A549 (cell line): ENCODE measurements at regions of chr10 and their contacts with region 1.

Region 1: DNA sequence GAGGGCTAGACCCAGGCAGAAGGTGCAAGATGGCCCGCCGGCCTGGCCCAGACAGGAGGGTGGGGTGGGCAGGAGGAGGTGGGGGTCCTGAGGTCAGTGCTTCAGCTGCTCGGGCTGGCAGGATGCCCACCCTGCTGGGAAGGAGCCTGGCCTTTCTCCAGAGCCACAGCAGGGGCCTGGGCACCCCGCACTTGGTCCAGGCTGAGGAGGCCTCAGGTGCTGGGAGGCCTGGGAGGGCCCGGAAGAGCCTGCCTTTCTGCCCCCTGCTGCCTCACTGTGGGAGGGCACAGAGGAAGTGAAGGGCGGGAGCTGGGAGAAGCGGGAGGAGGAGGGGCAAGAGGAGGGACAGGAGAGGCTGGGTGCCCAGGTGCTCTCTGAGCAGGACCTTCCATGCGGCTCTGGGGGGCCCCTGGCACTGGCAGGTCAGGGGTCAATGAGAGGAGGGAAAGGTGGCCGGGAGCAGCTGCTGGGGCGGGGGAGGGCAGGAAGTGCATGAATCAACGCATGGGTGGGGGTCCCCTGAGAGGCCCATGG is 49.7 kb downstream of the PWWP2B start:
- DNase-seq: peak; percentile 60 to 87
- ATAC-seq: peak; percentile 56 to 83
- H3K4me3 ChIP-seq: peak overlapping the region; percentile 33
- H3K27ac ChIP-seq: peak overlapping the region; percentile 89 to 99
- H3K4me1 ChIP-seq: peaks cover 74% of the 10 kb centered on the region
- CTCF ChIP-seq: peak; percentile 34; the same call in 2 of the 3 replicates
- EP300 ChIP-seq: no peak
- POLR2A ChIP-seq: 0 out of 2 replicates have a peak, but pooled peaks have one; percentile 5
- RAD21 ChIP-seq: peak; percentile 35 to 49

Region 2: GRCh38 chr10:132387764-132388210 is 58.9 kb before region 1 on chr10:
- CTCF ChIA-PET with region 1: interaction called, 12 read pairs
- POLR2A ChIA-PET with region 1: no interaction called
- DNase-seq: peak; percentile 41 to 93
- ATAC-seq: peak; percentile 15 to 66; a peak in 3 of 6 replicates
- H3K4me3 ChIP-seq: no peak overlapping the region
- H3K27ac ChIP-seq: peak overlapping the region; percentile 51 to 74; a peak in 5 of 6 replicates
- H3K4me1 ChIP-seq: peaks cover 19% of the 10 kb centered on the region; the same call in 2 of the 3 replicates
- CTCF ChIP-seq: peak; percentile 36; the same call in 2 of the 3 replicates
- EP300 ChIP-seq: no peak
- POLR2A ChIP-seq: no peak
- RAD21 ChIP-seq: peak; percentile 71 to 78

Region 3: DNA sequence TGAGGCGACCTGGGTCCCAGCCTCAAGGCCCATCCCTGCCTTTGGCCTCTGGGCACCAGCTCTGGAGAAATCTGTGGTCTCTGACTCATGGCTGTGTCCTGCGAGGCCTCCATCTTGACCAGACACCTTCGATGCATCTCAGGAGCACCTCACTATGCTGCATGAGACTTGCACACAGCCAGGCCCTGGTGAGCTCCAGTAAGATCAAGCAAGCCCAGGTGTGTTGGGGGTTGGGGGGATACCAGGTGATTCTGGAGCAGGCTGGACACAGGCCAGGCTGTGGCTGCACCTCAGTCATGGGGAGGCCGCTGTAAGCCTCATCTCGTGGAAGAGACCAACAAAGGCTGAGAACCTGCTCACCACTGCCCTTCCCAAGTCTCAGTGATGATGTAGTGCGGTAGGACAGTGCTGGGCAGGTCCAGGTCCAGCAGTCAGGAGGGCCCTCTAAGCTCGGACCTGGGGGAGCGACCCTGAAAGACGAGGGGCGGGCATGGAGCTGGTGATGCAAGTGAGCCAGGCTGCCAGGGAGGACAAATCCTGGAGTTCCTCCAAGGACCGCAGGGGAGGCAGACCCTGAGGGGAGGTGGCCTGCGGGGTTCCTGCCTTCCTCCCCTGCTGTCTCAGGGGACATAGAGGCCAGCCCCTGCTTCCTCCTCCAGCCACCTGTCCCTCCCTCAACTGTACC is 53.1 kb before region 1 on chr10:
- CTCF ChIA-PET with region 1: interaction called, 11 read pairs
- POLR2A ChIA-PET with region 1: no interaction called
- DNase-seq: no peak
- ATAC-seq: no peak
- H3K4me3 ChIP-seq: no peak overlapping the region
- H3K27ac ChIP-seq: peak overlapping the region in 1 of 2 experiments; percentile 15; a peak in 1 of 6 replicates
- H3K4me1 ChIP-seq: peaks cover 38% of the 10 kb centered on the region
- CTCF ChIP-seq: no peak
- EP300 ChIP-seq: no peak
- POLR2A ChIP-seq: no peak
- RAD21 ChIP-seq: no peak

Region 4: GRCh38 chr10:132616170-132616995 is 169.7 kb after region 1 on chr10:
- CTCF ChIA-PET with region 1: no interaction called
- POLR2A ChIA-PET with region 1: no interaction called
- DNase-seq: no peak
- ATAC-seq: no peak
- H3K4me3 ChIP-seq: no peak overlapping the region
- H3K27ac ChIP-seq: no peak overlapping the region
- H3K4me1 ChIP-seq: no peaks in the 10 kb centered on the region
- CTCF ChIP-seq: no peak
- EP300 ChIP-seq: no peak
- POLR2A ChIP-seq: no peak
- RAD21 ChIP-seq: no peak

Region 5: GRCh38 chr10:132677473-132678227 is 230.9 kb after region 1 on chr10:
- CTCF ChIA-PET with region 1: no interaction called
- POLR2A ChIA-PET with region 1: no interaction called
- DNase-seq: no peak
- ATAC-seq: no peak
- H3K4me3 ChIP-seq: no peak overlapping the region
- H3K27ac ChIP-seq: no peak overlapping the region
- H3K4me1 ChIP-seq: no peaks in the 10 kb centered on the region
- CTCF ChIP-seq: no peak
- EP300 ChIP-seq: no peak
- POLR2A ChIP-seq: no peak
- RAD21 ChIP-seq: no peak